CD4-positive, alpha-beta T cell (primary cell): ENCODE measurements at regions of chr3 and their contacts with region 1.

Region 1: GRCh38 chr3:50365080-50365841 is 5.9 kb upstream of the TMEM115 start:
- DNase-seq: peak; percentile 92 to 97 (median 95)
- ATAC-seq: peak; percentile 95
- H3K4me3 ChIP-seq: peak overlapping the region; percentile 73
- H3K4me3 Mint-ChIP-seq: peak overlapping the region; percentile 94
- H3K27ac ChIP-seq: peak overlapping the region; percentile 69 to 81
- H3K27ac Mint-ChIP-seq: peak overlapping the region; percentile 98
- H3K4me1 ChIP-seq: peaks cover 30% of the 10 kb centered on the region
- H3K4me1 Mint-ChIP-seq: peaks cover 25% of the 10 kb centered on the region
- H3K27me3 ChIP-seq: no peaks in the 10 kb centered on the region
- H3K27me3 Mint-ChIP-seq: no peaks in the 10 kb centered on the region
- CTCF ChIP-seq: no peak

Region 2: DNA sequence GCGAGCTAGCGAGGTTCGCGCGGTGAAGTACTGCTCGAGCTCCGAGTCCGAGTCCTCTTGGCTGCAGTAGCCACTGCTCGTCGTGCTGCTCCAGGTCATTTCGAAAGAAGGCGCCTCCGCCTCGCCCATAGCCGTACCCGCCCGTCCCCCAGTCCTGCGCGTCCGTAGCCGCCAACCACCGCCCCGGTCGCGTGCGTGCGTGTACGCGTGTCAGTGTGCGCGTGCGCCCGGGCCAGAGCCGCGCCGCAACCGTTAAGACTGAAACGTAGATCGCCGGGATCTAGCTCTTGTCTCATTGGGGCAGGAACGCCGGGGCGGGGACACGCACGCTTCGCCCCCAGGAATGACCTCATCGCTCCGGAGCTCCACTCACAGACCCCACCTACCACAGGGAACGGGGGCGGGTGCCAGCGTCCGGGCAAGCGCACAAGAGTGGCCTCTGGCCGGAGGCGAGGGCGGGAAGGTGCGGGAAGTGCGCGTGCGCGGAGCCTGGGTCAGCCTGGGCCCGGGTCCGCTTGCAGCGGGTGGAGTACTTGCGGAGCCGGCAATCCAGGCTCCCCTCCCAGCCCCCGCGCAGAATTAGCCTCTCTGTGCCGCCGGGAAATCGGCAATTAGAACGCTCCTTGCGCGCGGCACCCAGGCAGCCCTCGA is 27.9 kb before region 1 on chr3:
- CTCF ChIA-PET with region 1: no interaction called
- POLR2A ChIA-PET with region 1: interaction called, 16 read pairs
- intact Hi-C with region 1: no loop called
- DNase-seq: peak; percentile 81 to 98 (median 90)
- ATAC-seq: peak; percentile 77
- H3K4me3 ChIP-seq: peak overlapping the region; percentile 93
- H3K4me3 Mint-ChIP-seq: peak overlapping the region; percentile 96
- H3K27ac ChIP-seq: peak overlapping the region; percentile 95 to 96
- H3K27ac Mint-ChIP-seq: peak overlapping the region; percentile 95
- H3K4me1 ChIP-seq: peaks cover 85% of the 10 kb centered on the region
- H3K4me1 Mint-ChIP-seq: peaks cover 71% of the 10 kb centered on the region
- H3K27me3 ChIP-seq: no peaks in the 10 kb centered on the region
- H3K27me3 Mint-ChIP-seq: no peaks in the 10 kb centered on the region
- CTCF ChIP-seq: no peak

Region 3: GRCh38 chr3:50503504-50504342 is 138.5 kb after region 1 on chr3 and contains the start of gene CACNA2D2:
- CTCF ChIA-PET with region 1: no interaction called
- POLR2A ChIA-PET with region 1: no interaction called
- intact Hi-C with region 1: loop called in 1 of 2 experiments (anchors 5 kb)
- DNase-seq: peak; percentile 39 to 83 (median 69)
- ATAC-seq: peak; percentile 94
- H3K4me3 ChIP-seq: peak within 1 kb of the TSS; percentile 48
- H3K4me3 Mint-ChIP-seq: peak within 1 kb of the TSS; percentile 83
- H3K27ac ChIP-seq: no peak within 1 kb of the TSS
- H3K27ac Mint-ChIP-seq: no peak within 1 kb of the TSS
- H3K4me1 ChIP-seq: peaks cover 16% of the 10 kb centered on the region
- H3K4me1 Mint-ChIP-seq: peaks cover 6% of the 10 kb centered on the region
- H3K27me3 ChIP-seq: peaks cover 3 to 17% of the 10 kb centered on the region in 2 experiments
- H3K27me3 Mint-ChIP-seq: peaks cover 21% of the 10 kb centered on the region
- CTCF ChIP-seq: no peak
- total RNA-seq, gene CACNA2D2: 2.5 to 3.8 TPM

Region 4: GRCh38 chr3:50542177-50543034 is 177.1 kb after region 1 on chr3:
- CTCF ChIA-PET with region 1: interaction called, 5 read pairs
- POLR2A ChIA-PET with region 1: no interaction called
- intact Hi-C with region 1: loop called in 1 of 2 experiments (anchors 5 kb)
- DNase-seq: peak; percentile 29 to 79 (median 50)
- ATAC-seq: peak; percentile 74
- H3K4me3 ChIP-seq: no peak overlapping the region
- H3K4me3 Mint-ChIP-seq: no peak overlapping the region
- H3K27ac ChIP-seq: no peak overlapping the region
- H3K27ac Mint-ChIP-seq: no peak overlapping the region
- H3K4me1 ChIP-seq: no peaks in the 10 kb centered on the region
- H3K4me1 Mint-ChIP-seq: no peaks in the 10 kb centered on the region
- H3K27me3 ChIP-seq: peaks cover 0 to 4% of the 10 kb centered on the region in 2 experiments
- H3K27me3 Mint-ChIP-seq: peaks cover 13% of the 10 kb centered on the region
- CTCF ChIP-seq: peak; percentile 90

Region 5: DNA sequence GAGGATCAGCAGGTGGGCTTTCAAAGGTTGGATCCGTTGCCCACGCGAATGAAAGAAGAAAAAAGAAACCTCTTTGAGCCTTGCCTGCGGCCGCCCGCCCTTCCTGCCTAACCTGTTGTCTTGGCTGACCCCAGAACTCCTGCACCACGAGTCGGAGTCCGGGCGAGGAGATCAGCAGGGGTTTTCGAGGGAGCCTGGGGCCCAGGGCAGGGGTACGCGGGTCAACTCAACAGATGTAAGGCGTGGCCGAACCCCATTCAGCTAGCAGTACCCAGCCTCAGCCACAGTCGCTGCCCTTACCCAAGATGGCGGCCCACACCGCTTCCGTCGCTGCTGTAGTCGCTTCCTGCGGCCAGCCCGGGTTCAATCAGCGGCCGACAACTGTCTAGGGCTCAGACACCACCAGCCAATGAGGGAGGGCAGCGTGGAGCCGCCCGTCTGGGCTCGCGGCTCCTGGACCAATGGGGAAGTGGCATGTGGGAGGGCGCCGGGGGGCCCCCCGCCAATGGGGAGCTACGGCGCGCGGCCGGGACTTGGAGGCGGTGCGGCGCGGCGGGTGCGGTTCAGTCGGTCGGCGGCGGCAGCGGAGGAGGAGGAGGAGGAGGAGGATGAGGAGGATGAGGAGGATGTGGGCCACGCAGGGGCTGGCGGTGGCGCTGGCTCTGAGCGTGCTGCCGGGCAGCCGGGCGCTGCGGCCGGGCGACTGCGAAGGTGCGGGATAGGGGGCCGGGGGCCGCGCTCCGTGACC is 1019.6 kb after region 1 on chr3 and contains the start of gene MANF:
- CTCF ChIA-PET with region 1: no interaction called
- POLR2A ChIA-PET with region 1: interaction called, 5 read pairs
- intact Hi-C with region 1: loop called in 1 of 2 experiments (anchors 5 kb)
- DNase-seq: peak; percentile 93 to 99 (median 95)
- ATAC-seq: peak; percentile 95
- H3K4me3 ChIP-seq: peak within 1 kb of the TSS; percentile 99
- H3K4me3 Mint-ChIP-seq: peak within 1 kb of the TSS; percentile 99
- H3K27ac ChIP-seq: peak within 1 kb of the TSS; percentile 84 to 96
- H3K27ac Mint-ChIP-seq: peak within 1 kb of the TSS; percentile 99
- H3K4me1 ChIP-seq: peaks cover 47% of the 10 kb centered on the region
- H3K4me1 Mint-ChIP-seq: peaks cover 55% of the 10 kb centered on the region
- H3K27me3 ChIP-seq: no peaks in the 10 kb centered on the region
- H3K27me3 Mint-ChIP-seq: no peaks in the 10 kb centered on the region
- CTCF ChIP-seq: no peak
- total RNA-seq, gene MANF: 26.4 to 30.2 TPM

Region 6: DNA sequence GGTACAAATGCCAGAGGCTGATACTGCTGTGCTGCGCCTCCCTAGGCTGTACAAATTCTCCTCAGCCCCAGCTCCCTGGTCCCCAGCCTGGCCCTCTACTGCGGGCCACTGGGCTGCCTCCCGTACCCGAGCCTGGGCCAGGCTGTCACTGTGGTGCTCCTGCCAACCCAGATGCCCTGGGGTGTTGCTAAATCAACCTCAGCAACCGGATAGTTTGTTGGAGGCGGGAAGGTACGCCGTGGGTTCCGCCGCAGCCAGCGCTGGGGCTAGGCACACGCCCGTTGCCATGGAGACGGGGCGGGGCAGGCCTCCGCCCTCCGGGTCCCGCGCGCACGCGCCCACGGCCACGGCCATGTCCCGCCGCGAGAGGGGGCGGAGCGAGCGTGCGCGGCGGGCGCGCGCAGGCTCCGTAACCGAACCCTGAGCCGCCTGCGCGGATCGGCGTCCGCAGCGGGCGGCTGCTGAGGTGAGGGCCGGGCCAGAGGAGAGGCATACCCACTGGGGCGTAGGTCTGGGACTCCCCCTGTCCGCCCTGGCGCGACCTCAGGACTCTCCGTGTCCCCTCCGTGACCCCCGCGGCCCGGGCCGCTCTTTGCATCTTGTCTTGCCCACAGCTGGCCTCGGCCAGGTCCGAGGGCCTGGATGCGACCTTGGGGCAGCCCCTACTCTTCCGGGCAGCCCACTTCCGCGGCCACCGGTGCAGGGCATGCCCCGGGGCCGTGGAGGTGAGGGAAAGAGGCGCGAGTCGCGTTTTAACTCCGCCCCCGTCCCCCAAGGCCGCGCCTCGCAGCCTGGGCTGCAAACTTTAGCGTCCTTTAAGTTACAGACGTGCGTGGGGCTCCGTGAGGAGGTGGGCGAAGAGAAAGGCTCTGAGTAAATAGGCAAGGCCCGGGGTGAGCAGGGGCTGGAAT is 1305.8 kb after region 1 on chr3 and contains the start of gene TEX264:
- CTCF ChIA-PET with region 1: no interaction called
- POLR2A ChIA-PET with region 1: no interaction called
- intact Hi-C with region 1: loop called in 1 of 2 experiments (anchors 5 kb)
- DNase-seq: peak; percentile 88 to 100 (median 95)
- ATAC-seq: peak; percentile 75
- H3K4me3 ChIP-seq: peak within 1 kb of the TSS; percentile 98
- H3K4me3 Mint-ChIP-seq: peak within 1 kb of the TSS; percentile 94
- H3K27ac ChIP-seq: peak within 1 kb of the TSS; percentile 83 to 91
- H3K27ac Mint-ChIP-seq: peak within 1 kb of the TSS; percentile 97
- H3K4me1 ChIP-seq: peaks cover 67% of the 10 kb centered on the region
- H3K4me1 Mint-ChIP-seq: peaks cover 80% of the 10 kb centered on the region
- H3K27me3 ChIP-seq: no peaks in the 10 kb centered on the region
- H3K27me3 Mint-ChIP-seq: no peaks in the 10 kb centered on the region
- CTCF ChIP-seq: no peak
- total RNA-seq, gene TEX264: 24.9 to 25.9 TPM

Region 7: GRCh38 chr3:52154117-52155094 is 1789.1 kb after region 1 on chr3 and contains the start of gene POC1A:
- CTCF ChIA-PET with region 1: no interaction called
- POLR2A ChIA-PET with region 1: no interaction called
- intact Hi-C with region 1: loop called in 1 of 2 experiments (anchors 5 kb)
- DNase-seq: peak; percentile 66 to 94 (median 78)
- ATAC-seq: peak; percentile 87
- H3K4me3 ChIP-seq: peak within 1 kb of the TSS; percentile 87
- H3K4me3 Mint-ChIP-seq: peak within 1 kb of the TSS; percentile 99
- H3K27ac ChIP-seq: peak within 1 kb of the TSS; percentile 73 to 74
- H3K27ac Mint-ChIP-seq: peak within 1 kb of the TSS; percentile 96
- H3K4me1 ChIP-seq: peaks cover 17% of the 10 kb centered on the region
- H3K4me1 Mint-ChIP-seq: peaks cover 12% of the 10 kb centered on the region
- H3K27me3 ChIP-seq: no peaks in the 10 kb centered on the region
- H3K27me3 Mint-ChIP-seq: no peaks in the 10 kb centered on the region
- CTCF ChIP-seq: peak; percentile 9
- total RNA-seq, gene POC1A: 0.22 to 0.39 TPM